ENCODE measurements at regions of chr7 and their contacts with region 1.

Region 1: GRCh38 chr7:26705567-26705966 is 158.8 kb downstream of the SKAP2 start:
- DNase-seq: peak in 2 of 3 donors; percentile 64 to 73
- H3K4me3 ChIP-seq: no peak overlapping the region
- H3K27ac ChIP-seq: peak overlapping the region in 1 of 2 experiments; percentile 28
- H3K4me1 ChIP-seq: peaks cover 6 to 21% (median 14%) of the 10 kb centered on the region in 4 experiments
- H3K27me3 ChIP-seq: no peaks in the 10 kb centered on the region

Region 2: DNA sequence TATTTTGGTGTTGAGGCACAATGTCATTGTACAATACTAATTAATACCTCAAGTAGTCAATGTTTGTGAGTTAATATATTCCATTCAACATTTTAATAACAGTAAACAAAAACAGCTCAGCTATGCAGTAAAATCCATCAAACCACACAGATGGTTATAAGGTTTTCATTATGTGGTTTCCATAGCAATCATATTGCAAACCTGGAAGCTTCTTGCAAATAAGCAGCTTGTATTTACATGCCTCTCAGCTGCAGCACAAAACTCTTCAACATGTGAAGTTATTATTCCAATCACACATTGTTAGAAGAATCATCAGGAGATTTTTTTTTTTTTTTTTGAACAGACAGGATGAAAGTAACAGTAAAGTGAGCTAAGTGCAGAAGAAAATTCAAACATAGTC is 11.4 kb before region 1 on chr7:
- CTCF ChIA-PET with region 1: interaction called, 19 read pairs
- POLR2A ChIA-PET with region 1: interaction called, 3 read pairs
- DNase-seq: peak in 1 of 3 donors; percentile 47
- H3K4me3 ChIP-seq: no peak overlapping the region
- H3K27ac ChIP-seq: no peak overlapping the region
- H3K4me1 ChIP-seq: peaks cover 20 to 50% (median 36%) of the 10 kb centered on the region in 4 experiments
- H3K27me3 ChIP-seq: no peaks in the 10 kb centered on the region

Region 3: DNA sequence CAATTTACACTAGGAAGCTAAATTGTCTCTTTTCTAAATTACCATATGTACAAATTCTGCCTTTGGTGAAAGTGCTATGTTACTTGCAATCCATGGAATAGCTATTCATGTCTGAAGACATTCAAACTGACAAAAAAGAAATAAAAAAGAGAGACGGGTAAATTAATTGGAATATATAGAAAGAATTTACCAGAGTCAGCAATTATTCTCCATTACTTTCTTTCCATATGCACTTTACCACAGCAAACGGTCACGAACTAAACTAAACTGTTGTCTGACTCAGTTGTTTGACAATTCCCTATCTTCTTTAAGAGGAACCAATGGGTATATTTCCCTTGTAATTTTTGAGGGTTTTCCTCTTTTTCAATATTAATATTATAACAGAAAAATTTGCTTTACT is 304.5 kb after region 1 on chr7:
- CTCF ChIA-PET with region 1: no interaction called
- POLR2A ChIA-PET with region 1: no interaction called
- DNase-seq: no peak
- H3K4me3 ChIP-seq: no peak overlapping the region
- H3K27ac ChIP-seq: no peak overlapping the region
- H3K4me1 ChIP-seq: peaks cover 0 to 16% (median 0%) of the 10 kb centered on the region in 4 experiments
- H3K27me3 ChIP-seq: no peaks in the 10 kb centered on the region

Measured in common myeloid progenitor, CD34-positive (primary cell).